Calu3 (cell line): ENCODE measurements at regions of chrX and their contacts with region 1.

Region 1: DNA sequence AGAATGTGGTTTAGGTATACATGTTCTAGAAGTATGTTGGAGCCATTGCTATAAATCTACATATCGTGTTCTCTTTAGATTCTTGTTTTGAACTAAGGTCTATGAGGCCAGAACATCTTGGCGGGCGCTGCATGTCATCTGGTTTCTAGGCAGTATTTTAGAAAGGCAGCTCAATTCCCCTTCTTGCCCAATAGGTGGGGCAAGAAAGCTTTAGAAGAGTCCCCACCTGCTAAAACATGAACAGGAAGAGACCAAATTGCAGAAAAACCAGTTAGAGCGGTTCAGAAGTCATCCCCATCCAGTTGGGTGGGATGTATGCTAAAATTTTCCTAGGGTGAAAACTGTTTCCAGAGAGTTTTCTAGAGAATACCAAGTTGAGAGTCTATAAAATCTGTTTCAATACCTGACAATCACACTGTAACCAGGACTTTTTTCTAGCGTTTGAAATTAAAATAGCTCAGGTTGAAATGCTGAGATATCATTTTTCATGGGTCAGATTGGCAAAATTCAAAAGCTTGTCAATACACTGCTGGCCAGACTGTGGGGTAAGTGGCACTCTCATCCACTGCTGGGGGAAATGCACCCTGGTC is 17.5 kb upstream of the SH3KBP1 start:
- DNase-seq: peak; percentile 45
- H3K4me3 Mint-ChIP-seq: no peak overlapping the region
- H3K27ac Mint-ChIP-seq: peak overlapping the region; percentile 54
- H3K4me1 Mint-ChIP-seq: peaks cover 22% of the 10 kb centered on the region
- H3K27me3 Mint-ChIP-seq: no peaks in the 10 kb centered on the region
- CTCF ChIP-seq: peak; percentile 58

Region 2: DNA sequence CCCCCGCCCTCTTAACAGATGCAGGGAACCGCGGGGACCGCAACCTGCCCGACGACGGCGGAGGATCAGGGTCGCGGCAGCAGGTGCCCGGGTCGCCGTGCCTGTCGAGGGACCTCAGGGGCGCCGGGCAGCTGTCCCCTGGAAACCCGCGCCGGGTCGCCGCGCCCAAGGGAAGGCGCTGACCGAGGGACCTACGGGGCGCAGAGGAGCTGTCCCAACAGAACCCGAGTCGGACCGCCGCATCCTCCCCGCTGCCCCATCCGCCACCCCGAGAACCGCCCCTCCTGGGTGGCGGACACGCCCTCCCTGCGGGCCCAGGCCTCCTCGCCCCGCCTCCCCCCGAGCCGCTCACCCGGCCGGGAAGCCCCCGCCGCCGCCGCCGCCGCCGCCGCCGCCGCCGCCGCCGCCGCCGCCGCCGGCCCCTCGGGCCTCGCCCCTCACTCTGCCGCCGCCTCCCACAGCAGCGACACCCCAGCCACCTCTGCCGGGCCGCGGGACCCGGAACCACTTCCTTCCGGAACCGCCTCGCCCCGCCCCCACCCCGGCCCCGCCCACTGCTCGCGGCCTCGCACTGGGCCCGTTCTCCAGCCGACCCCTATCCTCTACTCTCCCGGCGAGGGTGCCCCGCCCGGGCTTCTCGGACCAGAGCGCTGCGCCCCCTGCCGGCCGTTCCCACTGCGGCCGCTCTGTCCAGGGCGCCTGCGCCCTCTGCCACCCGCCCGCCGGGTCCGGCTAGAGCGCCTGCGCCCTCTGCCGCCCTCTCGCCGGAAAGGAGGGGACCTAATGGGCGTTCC is 85.9 kb after region 1 on chrX and contains the start of gene BCLAF3:
- CTCF ChIA-PET with region 1: no interaction called
- intact Hi-C with region 1: loop called (anchors 2 kb)
- DNase-seq: peak; percentile 95
- H3K4me3 Mint-ChIP-seq: peak within 1 kb of the TSS; percentile 71
- H3K27ac Mint-ChIP-seq: peak within 1 kb of the TSS; percentile 36
- H3K4me1 Mint-ChIP-seq: peaks cover 9% of the 10 kb centered on the region
- H3K27me3 Mint-ChIP-seq: peaks cover 10% of the 10 kb centered on the region
- CTCF ChIP-seq: peak; percentile 86
- total RNA-seq, gene BCLAF3: 11.1 and 12.7 TPM in 2 replicates

Region 3: GRCh38 chrX:20066968-20067708 is 162.3 kb after region 1 on chrX:
- CTCF ChIA-PET with region 1: interaction called, 37 read pairs
- intact Hi-C with region 1: loop called (anchors 1 kb)
- DNase-seq: peak; percentile 36
- H3K4me3 Mint-ChIP-seq: no peak overlapping the region
- H3K27ac Mint-ChIP-seq: peak overlapping the region; percentile 67
- H3K4me1 Mint-ChIP-seq: peaks cover 31% of the 10 kb centered on the region
- H3K27me3 Mint-ChIP-seq: no peaks in the 10 kb centered on the region
- CTCF ChIP-seq: peak; percentile 32

Region 4: DNA sequence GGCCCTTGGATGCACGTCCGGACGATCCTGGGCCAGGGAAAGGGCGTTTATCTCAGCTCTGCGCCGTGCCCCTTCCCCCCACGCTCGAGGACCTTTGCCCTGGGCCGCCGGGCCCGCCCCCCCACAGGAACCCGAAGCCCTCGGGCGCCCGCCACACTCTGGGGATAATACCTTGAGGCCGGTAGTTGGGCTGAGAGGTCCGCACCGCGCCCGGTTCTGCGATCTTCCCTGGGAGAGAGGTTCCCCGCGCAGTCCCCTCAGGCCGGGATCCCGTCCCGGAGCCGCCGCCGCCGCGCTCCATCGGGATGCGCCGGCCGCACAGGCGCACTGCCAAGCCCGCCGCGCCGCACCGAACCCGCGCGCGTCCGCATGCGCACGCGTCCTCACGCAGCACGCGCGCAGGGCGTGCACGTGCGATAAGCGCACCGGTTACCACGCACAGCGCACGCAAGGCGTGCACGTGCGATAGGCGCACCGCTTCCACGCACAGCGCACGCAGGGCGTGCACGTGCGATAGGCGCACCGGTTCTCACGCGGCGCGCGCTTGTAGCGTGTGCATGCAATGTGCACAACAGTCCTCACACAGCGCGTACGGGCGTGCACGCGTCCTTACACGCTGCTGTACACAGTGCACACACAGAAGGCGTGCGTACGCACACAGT is 211.8 kb after region 1 on chrX and contains the start of gene MAP7D2:
- CTCF ChIA-PET with region 1: no interaction called
- intact Hi-C with region 1: loop called (anchors 5 kb)
- DNase-seq: peak; percentile 11
- H3K4me3 Mint-ChIP-seq: peak within 1 kb of the TSS; percentile 73
- H3K27ac Mint-ChIP-seq: no peak within 1 kb of the TSS
- H3K4me1 Mint-ChIP-seq: peaks cover 25% of the 10 kb centered on the region
- H3K27me3 Mint-ChIP-seq: no peaks in the 10 kb centered on the region
- CTCF ChIP-seq: no peak
- total RNA-seq, gene MAP7D2: 2.6 and 4.0 TPM in 2 replicates